ENCODE measurements at regions of chr19 and their contacts with region 1.

Region 1: DNA sequence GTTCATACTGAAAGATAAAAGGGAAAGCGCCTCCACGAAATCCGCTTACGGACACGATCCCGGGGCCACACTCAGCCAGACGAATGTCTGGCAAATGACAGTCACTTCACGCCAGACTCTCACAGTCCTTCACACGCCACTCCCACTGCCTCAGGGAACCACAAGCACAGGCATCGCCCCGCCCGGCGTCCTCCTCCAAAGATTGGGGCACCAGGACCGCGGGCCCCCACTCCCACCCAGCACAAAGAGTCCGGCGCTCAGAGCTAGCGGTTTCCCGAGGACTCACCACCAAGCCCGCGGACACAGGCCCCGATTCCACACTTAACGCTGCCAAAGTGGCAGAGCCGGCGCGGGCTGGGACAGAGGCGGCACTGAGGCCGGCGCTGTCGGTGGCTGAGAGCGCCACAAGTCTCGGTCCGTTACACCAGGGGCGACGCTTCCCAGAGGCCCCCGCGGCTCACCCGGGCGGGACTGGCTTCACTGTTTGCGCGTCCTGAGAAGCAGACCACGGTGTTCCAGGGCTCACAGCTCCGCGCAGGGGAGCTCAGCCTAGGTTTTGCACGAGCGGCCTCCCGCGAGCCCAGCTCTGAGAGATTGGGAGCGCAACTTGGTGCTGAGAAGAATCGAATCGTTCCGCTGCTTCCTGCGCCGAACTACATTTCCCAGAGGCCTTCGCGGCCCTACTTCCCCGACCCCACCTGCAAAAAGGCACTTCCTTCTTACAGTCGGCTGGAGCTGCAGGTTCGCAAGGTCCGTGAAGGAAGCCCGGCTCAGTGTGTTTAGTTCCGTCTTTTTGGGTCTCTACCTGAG is at the start of gene ZNF569:
- DNase-seq: peak; percentile 68 to 94
- H3K4me3 ChIP-seq: peak within 1 kb of the TSS; percentile 71 to 83
- H3K27ac ChIP-seq: peak within 1 kb of the TSS; percentile 92 to 95
- H3K4me1 ChIP-seq: peaks cover 6 to 7% of the 10 kb centered on the region in 2 donors
- H3K27me3 ChIP-seq: no peaks in the 10 kb centered on the region
- CTCF ChIP-seq: no peak
- total RNA-seq, gene ZNF569: 0.11 TPM

Region 2: GRCh38 chr19:36687214-36688056 is 779.6 kb before region 1 on chr19 and contains the start of gene ZNF567:
- intact Hi-C with region 1: loop called (anchors 10 kb)
- DNase-seq: peak; percentile 88 to 98
- H3K4me3 ChIP-seq: peak within 1 kb of the TSS; percentile 68 to 75
- H3K27ac ChIP-seq: peak within 1 kb of the TSS; percentile 39 to 66
- H3K4me1 ChIP-seq: peaks cover 0 to 6% of the 10 kb centered on the region in 2 donors
- H3K27me3 ChIP-seq: no peaks in the 10 kb centered on the region
- CTCF ChIP-seq: no peak
- total RNA-seq, gene ZNF567: 3.7 TPM

Region 3: GRCh38 chr19:37077934-37078725 is 388.9 kb before region 1 on chr19 and contains the start of gene ZNF420:
- intact Hi-C with region 1: loop called (anchors 5 kb)
- DNase-seq: peak; percentile 77 to 96
- H3K4me3 ChIP-seq: peak within 1 kb of the TSS; percentile 84 to 87
- H3K27ac ChIP-seq: peak within 1 kb of the TSS; percentile 87 to 91
- H3K4me1 ChIP-seq: peaks cover 6 to 7% of the 10 kb centered on the region in 2 donors
- H3K27me3 ChIP-seq: no peaks in the 10 kb centered on the region
- CTCF ChIP-seq: no peak
- total RNA-seq, gene ZNF420: 69.9 TPM

Region 4: GRCh38 chr19:37217855-37218591 is 249.0 kb before region 1 on chr19 and contains the start of gene ZNF383:
- intact Hi-C with region 1: loop called (anchors 5 kb)
- DNase-seq: peak; percentile 47 to 91
- H3K4me3 ChIP-seq: peak within 1 kb of the TSS; percentile 60 to 73
- H3K27ac ChIP-seq: peak within 1 kb of the TSS; percentile 75 to 80
- H3K4me1 ChIP-seq: peaks cover 0 to 4% of the 10 kb centered on the region in 2 donors
- H3K27me3 ChIP-seq: no peaks in the 10 kb centered on the region
- CTCF ChIP-seq: no peak
- total RNA-seq, gene ZNF383: 6.9 TPM

Region 5: DNA sequence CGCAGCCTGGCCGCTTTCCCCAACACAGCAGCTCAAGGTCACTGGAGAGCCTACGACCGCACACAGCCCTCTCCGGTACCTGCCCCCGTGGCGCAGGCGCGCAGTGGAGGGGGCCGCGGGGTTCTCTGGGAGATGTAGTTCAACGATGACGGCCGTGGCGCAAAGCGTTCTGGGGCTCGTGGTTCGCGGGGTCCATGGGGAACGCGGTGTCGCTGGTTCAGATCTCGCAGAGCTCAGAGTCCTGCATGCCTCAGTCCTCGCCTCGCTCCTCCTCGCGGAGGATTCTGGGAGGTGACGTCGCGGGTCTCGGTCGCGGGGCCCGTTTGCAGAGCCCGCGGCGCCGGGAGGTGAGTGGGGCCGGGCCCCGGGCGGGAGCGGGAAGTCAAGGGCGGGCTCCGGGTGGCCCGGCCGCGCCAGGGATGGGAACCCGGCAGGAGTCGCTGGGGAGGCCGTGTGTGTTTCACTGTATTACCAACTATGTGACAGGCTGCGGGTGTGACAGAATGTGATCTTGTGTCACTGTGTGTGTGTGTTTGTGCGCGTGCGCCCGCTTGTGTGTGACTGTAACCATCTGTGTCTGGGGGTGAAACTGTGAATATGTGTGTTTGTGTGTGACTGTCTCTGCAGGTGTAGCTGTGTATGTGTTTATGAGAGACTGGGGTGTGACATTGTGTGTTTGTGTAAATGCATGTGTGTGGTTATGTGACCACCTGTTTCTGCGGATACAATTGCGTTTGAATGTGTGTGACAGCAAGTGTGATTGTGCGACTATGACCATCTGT is 95.9 kb before region 1 on chr19 and contains the start of gene ZNF527:
- intact Hi-C with region 1: loop called (anchors 2 kb)
- DNase-seq: peak; percentile 90 to 98
- H3K4me3 ChIP-seq: peak within 1 kb of the TSS; percentile 66 to 80
- H3K27ac ChIP-seq: peak within 1 kb of the TSS; percentile 85 to 87
- H3K4me1 ChIP-seq: no peaks in the 10 kb centered on the region
- H3K27me3 ChIP-seq: no peaks in the 10 kb centered on the region
- CTCF ChIP-seq: peak in 1 of 3 experiments; percentile 9
- total RNA-seq, gene ZNF527: 0.32 TPM

Region 6: DNA sequence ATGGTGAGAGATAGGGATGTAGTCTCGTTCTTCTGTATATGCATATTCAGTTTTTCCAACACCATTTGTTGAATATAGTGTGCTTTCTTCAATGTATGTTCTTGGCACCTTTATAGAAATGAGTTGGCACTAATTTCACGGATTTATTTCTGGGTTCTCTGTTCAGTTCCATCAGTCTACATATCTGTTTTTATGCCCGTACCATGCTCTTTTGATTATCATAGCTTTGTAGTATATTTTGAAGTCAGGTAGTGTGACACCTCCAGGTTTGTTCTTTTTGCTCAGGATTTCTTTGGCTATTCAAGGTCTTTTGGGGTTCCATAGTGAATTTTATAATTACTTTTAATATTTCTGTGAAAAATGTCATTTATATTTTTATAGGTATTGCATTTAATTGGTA is 25.2 kb after region 1 on chr19:
- intact Hi-C with region 1: no loop called
- DNase-seq: no peak
- H3K4me3 ChIP-seq: no peak overlapping the region
- H3K27ac ChIP-seq: no peak overlapping the region
- H3K4me1 ChIP-seq: no peaks in the 10 kb centered on the region
- H3K27me3 ChIP-seq: no peaks in the 10 kb centered on the region
- CTCF ChIP-seq: no peak

Region 7: GRCh38 chr19:37594304-37594981 is 127.4 kb after region 1 on chr19 and contains the starts of genes ZNF540 and ZNF571:
- intact Hi-C with region 1: loop called (anchors 2 kb)
- DNase-seq: peak; percentile 81 to 96
- H3K4me3 ChIP-seq: peak within 1 kb of the TSS; percentile 71 to 82
- H3K27ac ChIP-seq: peak within 1 kb of the TSS; percentile 82 to 92
- H3K4me1 ChIP-seq: peaks cover 0 to 3% of the 10 kb centered on the region in 2 donors
- H3K27me3 ChIP-seq: no peaks in the 10 kb centered on the region
- CTCF ChIP-seq: no peak
- total RNA-seq, gene ZNF540: not detected
- total RNA-seq, gene ZNF571: 0.11 TPM

Measured in ascending aorta (tissue), 2 donors.